Activated T-helper 1 cell treated with anti-CD3 and anti-CD28 coated beads, Interleukin-12 subunit alpha, Interleukin-12 subunit beta, Interleukin-2, Interleukin-4 antibody, amounts not matched to agents 30 ng/mL and 10 ng/mL and 1 ng/mL, durations not matched to agents 14 hours and 24 hours and 36 hours (primary cell): ENCODE measurements at regions of chr9 and their contacts with region 1.

Region 1: DNA sequence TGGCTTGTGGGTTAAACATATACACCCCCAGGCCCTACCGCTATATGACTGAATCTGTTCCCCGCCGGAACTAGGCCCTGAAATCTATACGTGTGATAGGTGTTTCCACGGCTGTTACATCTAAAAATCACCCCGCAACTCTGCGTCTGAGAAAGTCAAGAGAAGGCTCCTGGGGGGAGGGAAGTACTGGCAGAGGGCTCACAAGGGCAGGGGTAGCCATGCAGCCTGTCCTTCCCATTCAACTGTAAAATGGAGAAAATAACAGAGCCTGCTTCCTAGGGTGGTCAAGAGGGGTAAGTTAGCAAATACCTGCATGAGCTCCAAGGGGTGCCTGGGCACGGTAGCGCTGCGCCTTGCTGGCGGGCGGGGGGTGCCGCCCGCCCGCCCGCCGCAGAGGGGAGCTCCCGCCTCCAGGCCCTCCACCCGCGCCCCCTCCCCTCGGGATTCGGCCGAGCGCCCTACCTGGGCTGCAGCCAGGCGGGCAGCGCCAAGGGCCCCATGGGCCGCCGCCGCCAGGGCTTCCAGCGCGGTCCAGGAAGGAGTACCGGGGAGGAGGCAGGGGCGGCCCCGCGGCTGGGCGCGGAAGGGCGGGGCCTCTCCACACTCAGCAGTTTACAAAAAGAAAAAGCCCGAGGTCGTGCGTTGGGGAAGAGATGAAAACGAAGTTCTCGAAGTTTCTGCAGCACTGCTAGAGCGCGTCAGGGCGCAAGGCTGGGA is at the start of gene HACD4:
- DNase-seq: peak; percentile 67
- H3K4me3 Mint-ChIP-seq: peak within 1 kb of the TSS; percentile 63
- H3K27ac Mint-ChIP-seq: peak within 1 kb of the TSS; percentile 27
- H3K4me1 Mint-ChIP-seq: peaks cover 23% of the 10 kb centered on the region
- H3K27me3 Mint-ChIP-seq: no peaks in the 10 kb centered on the region
- total RNA-seq, gene HACD4: 2.7 and 3.0 TPM in 2 replicates

Region 2: DNA sequence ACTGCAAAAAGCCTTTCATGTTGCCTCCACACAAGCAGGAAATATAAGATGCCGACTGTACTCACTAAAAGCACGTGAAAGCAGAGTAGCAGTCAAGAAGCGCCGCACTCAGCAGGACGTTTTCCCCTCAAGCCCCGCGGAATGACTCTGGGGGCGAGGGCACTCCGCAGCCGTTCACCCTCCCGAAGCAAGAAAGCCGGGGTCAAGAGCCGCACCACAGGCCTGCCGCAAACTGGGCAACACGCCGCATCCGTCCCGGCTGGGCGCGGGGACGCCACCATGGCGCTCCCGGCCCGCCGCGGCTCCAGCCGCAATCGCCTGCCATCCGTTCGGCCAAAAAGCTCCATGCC is 1651.6 kb before region 1 on chr9:
- intact Hi-C with region 1: loop called (anchors 10 kb)
- DNase-seq: no peak
- H3K4me3 Mint-ChIP-seq: peak overlapping the region; percentile 98
- H3K27ac Mint-ChIP-seq: peak overlapping the region; percentile 98
- H3K4me1 Mint-ChIP-seq: peaks cover 61% of the 10 kb centered on the region
- H3K27me3 Mint-ChIP-seq: no peaks in the 10 kb centered on the region

Region 3: DNA sequence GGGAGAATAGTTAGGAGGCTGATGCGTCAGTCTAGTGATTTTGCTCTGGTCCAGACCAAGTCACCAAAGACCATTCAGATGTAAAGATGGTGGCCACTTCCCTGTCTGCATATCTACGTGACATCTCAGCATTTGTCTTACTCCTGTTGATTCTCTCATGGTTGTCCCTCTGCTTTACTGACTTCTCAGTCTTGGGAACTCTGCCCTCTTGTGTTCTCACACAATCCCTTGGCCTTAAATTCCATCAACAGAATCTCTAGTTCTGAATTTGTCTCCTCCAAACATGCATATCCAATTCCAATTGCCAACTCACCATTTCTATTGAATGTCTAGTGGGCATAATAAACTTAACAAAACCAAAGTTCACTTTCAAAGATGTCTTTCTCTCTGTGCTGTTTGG is 1390.2 kb before region 1 on chr9:
- intact Hi-C with region 1: no loop called
- DNase-seq: no peak
- H3K4me3 Mint-ChIP-seq: no peak overlapping the region
- H3K27ac Mint-ChIP-seq: no peak overlapping the region
- H3K4me1 Mint-ChIP-seq: no peaks in the 10 kb centered on the region
- H3K27me3 Mint-ChIP-seq: no peaks in the 10 kb centered on the region

Region 4: DNA sequence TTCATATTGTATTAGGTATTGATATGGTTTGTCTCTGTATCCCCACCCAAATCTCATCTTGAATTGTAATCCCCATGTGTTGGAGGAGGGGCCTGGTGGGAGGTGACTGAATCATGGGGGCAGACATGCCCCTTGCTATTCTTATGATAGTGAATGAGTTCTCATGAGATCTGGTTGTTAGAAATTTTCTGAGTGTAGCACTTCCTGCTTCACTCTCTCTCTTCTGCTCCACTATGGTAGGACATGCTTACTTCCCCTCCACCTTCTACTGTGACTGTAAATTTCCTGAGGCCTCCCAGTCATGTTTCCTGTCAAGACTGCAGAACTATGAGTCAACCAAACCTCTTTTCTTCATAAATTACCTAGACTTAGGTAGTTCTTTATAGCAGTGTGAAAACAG is 1055.0 kb before region 1 on chr9:
- intact Hi-C with region 1: loop called (anchors 2 kb)
- DNase-seq: peak; percentile 47
- H3K4me3 Mint-ChIP-seq: peak overlapping the region; percentile 1
- H3K27ac Mint-ChIP-seq: peak overlapping the region; percentile 92
- H3K4me1 Mint-ChIP-seq: peaks cover 51% of the 10 kb centered on the region
- H3K27me3 Mint-ChIP-seq: no peaks in the 10 kb centered on the region

Region 5: DNA sequence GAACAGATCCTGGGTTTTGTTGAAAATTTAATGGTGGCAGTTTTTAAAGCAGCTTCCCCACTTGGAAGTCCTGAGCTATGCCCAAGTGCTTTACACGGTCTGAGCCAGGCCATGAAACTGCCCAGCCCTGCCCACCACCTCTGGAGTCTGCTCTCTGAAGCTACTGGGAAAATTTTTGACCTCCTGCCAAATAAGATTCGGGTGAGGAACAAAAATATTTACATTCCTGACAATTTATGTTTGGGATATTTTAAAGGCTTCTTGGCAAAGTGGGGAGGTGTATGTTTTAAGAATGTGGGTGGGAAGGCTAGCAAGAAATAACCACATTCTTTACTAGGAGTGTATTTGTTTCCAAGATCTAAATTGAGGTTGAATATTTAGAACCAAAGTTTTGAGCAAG is 49.8 kb before region 1 on chr9:
- intact Hi-C with region 1: no loop called
- DNase-seq: no peak
- H3K4me3 Mint-ChIP-seq: no peak overlapping the region
- H3K27ac Mint-ChIP-seq: no peak overlapping the region
- H3K4me1 Mint-ChIP-seq: no peaks in the 10 kb centered on the region
- H3K27me3 Mint-ChIP-seq: no peaks in the 10 kb centered on the region

Region 6: GRCh38 chr9:21001581-21001980 is 29.7 kb before region 1 on chr9:
- intact Hi-C with region 1: loop called (anchors 1 kb)
- DNase-seq: no peak
- H3K4me3 Mint-ChIP-seq: no peak overlapping the region
- H3K27ac Mint-ChIP-seq: no peak overlapping the region
- H3K4me1 Mint-ChIP-seq: peaks cover 28% of the 10 kb centered on the region
- H3K27me3 Mint-ChIP-seq: no peaks in the 10 kb centered on the region

Region 7: GRCh38 chr9:21110708-21111576 is 79.7 kb after region 1 on chr9:
- intact Hi-C with region 1: loop called (anchors 1 kb)
- DNase-seq: no peak
- H3K4me3 Mint-ChIP-seq: no peak overlapping the region
- H3K27ac Mint-ChIP-seq: no peak overlapping the region
- H3K4me1 Mint-ChIP-seq: no peaks in the 10 kb centered on the region
- H3K27me3 Mint-ChIP-seq: peaks cover 9% of the 10 kb centered on the region